ENCODE measurements at regions of chr18 and their contacts with region 1.

Region 1: GRCh38 chr18:54127759-54128378 is 96.6 kb downstream of the MBD2 start:
- H3K4me3 Mint-ChIP-seq: no peak overlapping the region
- H3K27ac Mint-ChIP-seq: no peak overlapping the region
- H3K4me1 Mint-ChIP-seq: no peaks in the 10 kb centered on the region
- H3K27me3 Mint-ChIP-seq: no peaks in the 10 kb centered on the region

Region 2: DNA sequence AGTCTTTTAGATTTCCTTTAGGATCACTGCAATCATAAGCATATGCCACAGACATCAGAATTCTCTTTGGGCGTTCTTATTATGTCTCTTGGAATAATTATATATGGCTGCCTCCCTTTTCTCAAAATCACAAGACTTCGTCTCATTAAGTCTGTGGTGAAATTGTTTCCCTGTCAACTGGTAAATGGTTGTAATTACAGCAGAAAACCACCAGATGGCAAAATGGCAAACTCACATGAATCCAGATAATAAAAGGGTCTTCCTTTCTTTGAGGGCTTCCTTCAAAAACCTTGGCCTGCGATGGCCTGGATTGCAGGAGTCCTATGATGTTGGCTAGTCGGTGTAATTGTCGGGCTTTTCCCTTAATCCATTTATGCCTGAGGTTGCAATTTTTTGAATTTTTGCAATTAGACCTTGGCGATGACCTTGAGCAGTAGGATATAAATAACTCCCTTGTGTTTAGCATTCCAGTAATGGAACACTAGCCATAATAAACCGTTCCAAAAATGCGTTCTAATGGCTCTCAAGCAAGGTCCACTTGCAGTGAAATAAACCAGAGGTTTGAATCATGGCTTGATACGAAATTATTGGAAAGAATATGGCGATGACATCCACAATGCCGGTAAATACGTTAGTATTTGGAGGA is 559.8 kb before region 1 on chr18:
- intact Hi-C with region 1: loop called (anchors 1 kb)
- H3K4me3 Mint-ChIP-seq: no peak overlapping the region
- H3K27ac Mint-ChIP-seq: no peak overlapping the region
- H3K4me1 Mint-ChIP-seq: no peaks in the 10 kb centered on the region
- H3K27me3 Mint-ChIP-seq: no peaks in the 10 kb centered on the region

Region 3: GRCh38 chr18:54191352-54191751 is 63.5 kb after region 1 on chr18:
- intact Hi-C with region 1: no loop called
- H3K4me3 Mint-ChIP-seq: no peak overlapping the region
- H3K27ac Mint-ChIP-seq: no peak overlapping the region
- H3K4me1 Mint-ChIP-seq: peaks cover 6% of the 10 kb centered on the region
- H3K27me3 Mint-ChIP-seq: no peaks in the 10 kb centered on the region

Region 4: DNA sequence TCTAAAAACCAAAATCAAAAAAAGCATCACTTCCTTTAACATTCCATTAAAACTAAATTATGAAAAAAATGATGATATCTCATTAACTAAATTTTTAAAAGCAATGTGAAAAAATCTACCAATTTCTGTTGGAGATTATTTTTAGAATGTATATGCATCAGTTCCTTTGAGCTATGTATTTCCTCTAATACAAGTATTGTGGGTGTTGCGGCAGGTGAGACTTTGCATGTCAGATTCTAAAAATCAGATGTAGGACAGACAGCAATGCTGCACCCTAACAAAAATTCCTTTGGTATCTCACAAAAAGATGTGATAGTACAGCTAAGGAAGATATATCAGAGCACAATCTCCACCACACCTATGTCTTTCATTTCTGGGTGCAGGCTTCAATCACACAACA is 89.8 kb after region 1 on chr18:
- intact Hi-C with region 1: no loop called
- H3K4me3 Mint-ChIP-seq: no peak overlapping the region
- H3K27ac Mint-ChIP-seq: no peak overlapping the region
- H3K4me1 Mint-ChIP-seq: peaks cover 46% of the 10 kb centered on the region
- H3K27me3 Mint-ChIP-seq: no peaks in the 10 kb centered on the region